ENCODE measurements at regions of chr5 and their contacts with region 1.

Region 1: GRCh38 chr5:56951946-56952691 is at the start of gene MIER3:
- DNase-seq: peak; percentile 66 to 67
- ATAC-seq: peak; percentile 93 to 94
- H3K4me3 ChIP-seq: peak within 1 kb of the TSS; percentile 62 to 90 (median 78)
- H3K27ac ChIP-seq: peak within 1 kb of the TSS; percentile 76 to 83 (median 79)
- H3K4me1 ChIP-seq: peaks cover 0 to 15% of the 10 kb centered on the region in 2 donors
- H3K27me3 ChIP-seq: no peaks in the 10 kb centered on the region
- CTCF ChIP-seq: no peak
- POLR2A ChIP-seq: peak; percentile 21 to 31
- total RNA-seq, gene MIER3: 12.2 to 33.4 (median 20.4) TPM

Region 2: DNA sequence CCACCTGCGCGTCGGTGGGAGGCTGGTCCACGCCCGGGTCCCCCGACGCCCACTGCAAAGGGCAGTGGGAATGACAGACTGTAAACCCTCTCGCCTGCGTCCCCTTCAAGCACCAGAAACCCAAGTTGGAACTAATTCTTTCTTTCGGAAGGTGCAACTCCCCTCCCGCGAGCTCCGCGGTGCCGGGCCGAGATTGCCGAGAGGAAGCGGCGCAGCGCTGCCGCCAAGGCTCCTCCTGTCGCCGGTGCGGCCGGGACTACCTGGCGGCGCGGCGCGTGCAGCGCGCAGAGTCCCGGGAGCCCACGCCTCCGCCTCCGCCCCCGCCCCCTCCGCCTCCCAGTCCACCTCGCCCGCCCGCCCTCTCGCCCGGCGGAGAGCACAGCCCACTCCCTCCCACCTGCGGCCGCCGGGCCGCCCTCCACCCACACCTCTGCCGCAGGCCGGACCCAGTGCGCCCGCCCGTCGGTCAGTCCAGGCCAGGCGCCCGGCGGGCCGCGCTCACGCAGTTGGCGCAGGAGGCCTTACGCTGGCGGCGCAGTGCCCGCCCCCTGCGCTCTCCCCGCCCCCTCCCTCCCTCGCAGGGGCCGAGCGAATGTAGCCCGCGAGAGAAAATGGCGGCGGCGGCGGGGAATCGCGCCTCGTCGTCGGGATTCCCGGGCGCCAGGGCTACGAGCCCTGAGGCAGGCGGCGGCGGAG is 137.0 kb before region 1 on chr5 and contains the start of gene MAP3K1:
- in situ Hi-C with region 1: no loop called
- intact Hi-C with region 1: loop called (anchors 5 kb)
- DNase-seq: peak; percentile 24 to 55
- ATAC-seq: peak; percentile 79
- H3K4me3 ChIP-seq: peak within 1 kb of the TSS; percentile 66 to 82 (median 76)
- H3K27ac ChIP-seq: peak within 1 kb of the TSS; percentile 75 to 94 (median 84)
- H3K4me1 ChIP-seq: peaks cover 28 to 38% of the 10 kb centered on the region in 2 donors
- H3K27me3 ChIP-seq: no peaks in the 10 kb centered on the region
- CTCF ChIP-seq: no peak
- POLR2A ChIP-seq: peak in 1 of 2 donors; percentile 13
- total RNA-seq, gene MAP3K1: 4.2 to 6.8 (median 5.4) TPM

Region 3: DNA sequence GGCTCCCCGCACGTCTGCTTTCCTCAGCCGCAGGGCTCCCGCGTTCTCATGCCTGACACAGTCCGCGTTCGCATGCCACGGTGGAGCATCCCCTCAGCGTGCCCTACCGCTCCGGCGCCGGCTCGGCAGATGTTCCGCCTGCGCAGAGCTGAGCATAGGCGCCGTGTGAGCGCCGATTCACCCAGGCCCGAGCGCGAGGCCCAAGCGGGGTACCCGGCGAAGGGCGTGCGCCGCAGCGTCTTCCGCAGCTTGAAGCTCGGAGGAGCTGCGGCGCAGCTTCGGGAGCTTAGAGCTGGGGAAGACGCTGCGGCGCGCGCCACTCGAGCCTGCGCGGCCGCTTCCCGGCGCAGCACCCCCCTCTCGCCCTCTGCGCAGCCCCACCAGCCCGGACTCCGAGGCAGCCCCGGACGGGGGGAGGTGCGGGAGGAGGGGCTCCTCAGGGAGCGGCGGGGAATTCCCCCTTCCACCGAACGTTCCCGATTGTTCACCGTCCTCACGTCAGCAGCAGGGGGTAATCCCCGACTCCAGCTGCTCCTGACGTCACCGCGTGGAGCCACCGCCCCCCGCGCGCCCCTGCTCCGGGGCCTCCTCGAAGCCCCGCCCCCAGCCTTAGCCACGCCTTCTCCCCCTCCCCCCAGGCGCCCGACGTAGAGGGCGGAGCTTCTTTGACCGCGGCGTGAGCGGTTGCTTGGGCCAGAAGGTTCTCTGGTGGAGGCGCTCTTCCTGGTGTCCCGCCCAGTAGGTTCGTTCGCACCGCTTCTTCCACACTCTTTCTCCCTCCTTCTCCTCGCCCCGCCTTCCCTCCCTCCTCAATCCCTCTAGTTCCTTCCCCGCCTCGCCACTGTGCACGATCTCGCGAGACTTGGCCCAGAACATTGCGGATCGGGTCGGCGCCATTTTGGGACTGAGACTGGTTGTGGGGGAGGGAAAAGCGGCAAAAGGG is 221.3 kb after region 1 on chr5 and contains the start of gene GPBP1:
- in situ Hi-C with region 1: no loop called
- intact Hi-C with region 1: loop called (anchors 1 kb)
- DNase-seq: peak; percentile 96 to 98
- ATAC-seq: peak; percentile 83 to 84
- H3K4me3 ChIP-seq: peak within 1 kb of the TSS; percentile 84 to 99 (median 92)
- H3K27ac ChIP-seq: peak within 1 kb of the TSS; percentile 98 to 100 (median 100)
- H3K4me1 ChIP-seq: peaks cover 25 to 35% of the 10 kb centered on the region in 2 donors
- H3K27me3 ChIP-seq: no peaks in the 10 kb centered on the region
- CTCF ChIP-seq: peak in 1 of 5 experiments; percentile 9
- POLR2A ChIP-seq: peak; percentile 79 to 85
- total RNA-seq, gene GPBP1: 40.4 to 58.0 (median 50.5) TPM